B cell (primary cell): ENCODE measurements at regions of chr1 and their contacts with region 1.

Region 1: DNA sequence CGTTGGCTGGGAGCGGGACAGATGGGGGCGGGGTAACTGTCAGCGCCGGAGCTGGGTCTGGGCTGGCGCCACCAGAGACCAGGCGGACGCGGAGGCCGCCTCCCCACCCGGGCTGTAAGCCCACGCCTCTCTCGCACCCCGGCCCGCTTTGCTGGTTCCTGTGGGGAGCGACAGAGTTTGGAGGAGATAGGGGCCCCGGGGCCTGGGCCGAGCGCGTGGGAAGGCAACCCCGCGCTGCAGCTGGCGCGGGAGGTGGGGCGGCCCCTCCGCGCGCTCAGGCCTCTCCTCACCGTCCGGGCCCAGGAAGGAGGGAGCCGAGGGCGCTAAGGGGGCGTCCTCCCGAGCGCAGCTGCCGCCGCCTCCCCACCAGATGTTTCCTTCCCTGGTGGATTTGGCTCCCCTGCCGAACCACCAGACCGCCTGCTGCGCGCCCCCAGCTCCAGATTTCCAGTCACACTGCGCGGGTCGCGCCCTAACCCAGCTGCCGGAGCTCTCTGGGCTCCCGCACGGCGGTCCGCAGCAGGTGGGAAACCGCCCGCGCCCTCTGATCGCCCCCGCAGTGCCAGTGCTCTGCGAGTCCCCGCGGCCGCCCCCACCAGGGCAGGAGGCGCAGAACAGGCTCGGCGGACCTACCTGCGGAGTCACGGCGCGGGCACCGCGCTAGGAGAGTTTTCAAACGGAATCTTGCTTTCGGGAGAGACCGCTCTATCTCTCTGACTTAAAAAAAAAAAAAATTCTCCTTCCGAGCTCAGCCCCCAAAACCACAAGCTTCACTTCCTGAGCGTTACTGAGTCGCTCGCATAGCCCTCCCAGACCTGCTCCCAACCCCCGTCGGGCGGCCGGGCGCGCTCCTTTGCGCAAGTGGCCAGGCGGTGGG is 1.1 kb downstream of the GFI1 start:
- DNase-seq: peak; percentile 72
- ATAC-seq: peak; percentile 67
- H3K4me3 ChIP-seq: peak overlapping the region; percentile 42 to 70 (median 60)
- H3K4me3 Mint-ChIP-seq: peak overlapping the region; percentile 87
- H3K27ac ChIP-seq: no peak overlapping the region
- H3K27ac Mint-ChIP-seq: no peak overlapping the region
- H3K4me1 ChIP-seq: peaks cover 31 to 40% of the 10 kb centered on the region in 2 donors
- H3K4me1 Mint-ChIP-seq: peaks cover 32% of the 10 kb centered on the region
- H3K27me3 ChIP-seq: peaks cover 0 to 54% (median 19%) of the 10 kb centered on the region in 4 experiments
- H3K27me3 Mint-ChIP-seq: peaks cover 28% of the 10 kb centered on the region
- CTCF ChIP-seq: peak; percentile 64

Region 2: DNA sequence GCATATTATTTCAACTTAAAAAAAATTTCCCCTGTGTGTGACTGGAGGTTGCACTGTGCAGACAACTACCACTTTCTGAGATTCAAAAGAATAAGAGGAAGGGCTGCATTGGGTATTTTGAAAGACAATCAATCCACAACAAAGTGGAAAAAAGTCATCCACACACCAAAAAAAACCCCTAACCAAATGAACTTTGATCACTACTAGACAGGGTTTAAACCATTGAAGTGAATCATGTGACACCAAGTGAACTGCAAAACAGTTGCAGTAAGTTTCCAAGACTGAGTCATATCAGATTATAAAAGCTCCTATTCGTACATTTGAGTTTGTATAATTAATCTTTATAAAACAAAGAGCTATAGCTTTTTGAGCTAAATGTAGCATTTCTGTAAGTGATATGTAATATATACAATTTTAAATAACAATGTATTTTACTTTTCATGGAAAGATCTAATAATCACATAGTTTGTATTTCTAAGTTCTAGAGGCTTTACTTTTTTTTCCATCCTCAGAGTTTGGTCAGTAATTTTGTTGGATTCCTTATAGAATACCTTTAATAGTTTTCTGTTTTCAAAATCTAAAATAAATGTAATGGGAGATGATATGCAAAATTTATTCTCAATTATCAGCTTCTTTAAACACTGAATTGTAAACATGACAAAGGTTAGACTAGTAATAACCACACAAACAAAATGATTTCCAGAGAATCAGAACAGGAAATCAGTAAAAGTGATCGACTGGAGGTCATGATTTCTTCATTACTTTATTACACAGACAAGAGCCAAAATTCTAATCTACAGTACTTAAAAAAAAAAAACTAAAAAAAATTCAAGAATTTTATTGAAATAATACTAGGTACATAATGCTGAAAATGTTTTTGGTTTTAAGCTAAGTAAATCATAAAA is 51.6 kb after region 1 on chr1:
- CTCF ChIA-PET with region 1: interaction called, 3 read pairs
- POLR2A ChIA-PET with region 1: no interaction called
- intact Hi-C with region 1: loop called (anchors 10 kb)
- DNase-seq: peak; percentile 11
- ATAC-seq: peak; percentile 72
- H3K4me3 ChIP-seq: no peak overlapping the region
- H3K4me3 Mint-ChIP-seq: peak overlapping the region; percentile 65
- H3K27ac ChIP-seq: no peak overlapping the region
- H3K27ac Mint-ChIP-seq: peak overlapping the region; percentile 59
- H3K4me1 ChIP-seq: peaks cover 8 to 18% of the 10 kb centered on the region in 2 donors
- H3K4me1 Mint-ChIP-seq: peaks cover 42% of the 10 kb centered on the region
- H3K27me3 ChIP-seq: no peaks in the 10 kb centered on the region
- H3K27me3 Mint-ChIP-seq: no peaks in the 10 kb centered on the region
- CTCF ChIP-seq: no peak

Region 3: GRCh38 chr1:92599184-92599583 is 113.6 kb after region 1 on chr1:
- CTCF ChIA-PET with region 1: no interaction called
- POLR2A ChIA-PET with region 1: no interaction called
- intact Hi-C with region 1: loop called (anchors 10 kb)
- DNase-seq: no peak
- ATAC-seq: no peak
- H3K4me3 ChIP-seq: no peak overlapping the region
- H3K4me3 Mint-ChIP-seq: no peak overlapping the region
- H3K27ac ChIP-seq: no peak overlapping the region
- H3K27ac Mint-ChIP-seq: no peak overlapping the region
- H3K4me1 ChIP-seq: no peaks in the 10 kb centered on the region
- H3K4me1 Mint-ChIP-seq: no peaks in the 10 kb centered on the region
- H3K27me3 ChIP-seq: no peaks in the 10 kb centered on the region
- H3K27me3 Mint-ChIP-seq: no peaks in the 10 kb centered on the region
- CTCF ChIP-seq: peak; percentile 39

Region 4: GRCh38 chr1:92623187-92623778 is 137.7 kb after region 1 on chr1:
- CTCF ChIA-PET with region 1: no interaction called
- POLR2A ChIA-PET with region 1: no interaction called
- intact Hi-C with region 1: no loop called
- DNase-seq: peak; percentile 9
- ATAC-seq: no peak
- H3K4me3 ChIP-seq: no peak overlapping the region
- H3K4me3 Mint-ChIP-seq: no peak overlapping the region
- H3K27ac ChIP-seq: no peak overlapping the region
- H3K27ac Mint-ChIP-seq: no peak overlapping the region
- H3K4me1 ChIP-seq: no peaks in the 10 kb centered on the region
- H3K4me1 Mint-ChIP-seq: no peaks in the 10 kb centered on the region
- H3K27me3 ChIP-seq: no peaks in the 10 kb centered on the region
- H3K27me3 Mint-ChIP-seq: no peaks in the 10 kb centered on the region
- CTCF ChIP-seq: peak; percentile 65